ENCODE measurements at regions of chr11 and their contacts with region 1.

Region 1: DNA sequence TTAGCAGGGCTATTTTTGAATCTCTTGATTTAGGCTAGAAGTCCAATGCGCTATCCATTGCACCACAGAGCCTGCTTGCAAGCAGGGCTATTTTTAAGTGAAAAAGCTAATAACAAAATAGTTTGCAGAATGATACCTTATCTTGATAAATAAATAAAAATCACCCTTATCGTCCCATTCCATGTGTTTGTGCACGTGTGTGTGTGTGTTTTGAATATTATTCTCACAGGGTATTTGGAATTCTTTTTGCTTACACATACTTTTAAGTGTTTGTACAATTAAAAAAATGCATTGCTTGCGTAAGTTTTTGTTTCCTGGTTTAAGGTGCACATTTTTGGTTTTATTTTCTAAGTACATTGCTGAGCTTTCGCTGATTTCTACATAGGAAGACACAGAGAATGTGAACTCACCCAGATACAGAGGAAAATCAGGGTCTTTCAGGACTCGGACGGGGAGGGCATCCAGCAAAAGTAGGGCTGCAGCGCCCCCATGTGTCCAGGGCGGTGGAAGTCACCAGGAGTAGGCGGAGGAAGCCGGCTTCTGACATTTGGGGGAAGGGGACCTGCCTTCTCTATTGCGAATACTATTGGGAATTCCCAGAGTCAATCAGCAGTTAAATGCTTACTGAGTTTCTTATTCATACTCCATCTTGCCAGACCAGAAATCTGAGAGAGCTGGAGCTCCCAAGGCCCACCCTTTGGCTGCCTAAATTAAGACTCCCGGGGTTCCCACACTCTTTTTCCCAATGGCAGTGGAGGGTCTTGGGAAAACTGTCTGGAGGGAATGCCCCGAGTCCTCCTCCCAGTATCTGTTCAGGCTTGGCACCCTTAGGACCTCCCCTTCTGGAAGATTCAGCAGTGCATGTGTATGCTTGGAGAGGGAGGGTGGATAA is 27.2 kb downstream of the SLC1A2 start:
- DNase-seq: peak; percentile 49
- ATAC-seq: peak; percentile 92
- H3K4me3 ChIP-seq: no peak overlapping the region
- H3K27ac ChIP-seq: no peak overlapping the region
- H3K4me1 ChIP-seq: peaks cover 15 to 18% of the 10 kb centered on the region in 2 experiments
- H3K27me3 ChIP-seq: no peaks in the 10 kb centered on the region
- CTCF ChIP-seq: peak; percentile 83 to 98 (median 84)
- POLR2A ChIP-seq: no peak
- RAD21 ChIP-seq: peak; percentile 98

Region 2: DNA sequence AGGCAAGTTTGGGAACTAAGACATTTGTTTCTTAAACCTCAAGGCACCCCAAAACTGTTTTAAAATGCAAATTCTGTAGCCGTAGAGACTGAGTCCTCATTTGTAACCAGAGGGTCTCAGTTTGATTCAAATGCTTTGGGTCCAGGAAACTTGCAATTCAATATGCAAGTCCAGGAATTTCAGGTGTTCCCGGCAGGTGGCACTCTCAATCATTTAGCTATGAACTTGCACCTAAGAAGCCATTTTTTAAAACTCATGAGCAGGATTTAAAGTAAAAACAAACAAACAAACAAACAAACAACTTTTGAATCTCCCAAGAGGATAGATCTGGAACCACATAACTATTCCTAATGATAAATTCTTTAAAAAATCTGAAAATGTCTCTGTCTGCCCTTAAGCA is 1025.6 kb before region 1 on chr11:
- CTCF ChIA-PET with region 1: no interaction called
- POLR2A ChIA-PET with region 1: no interaction called
- RAD21 ChIA-PET with region 1: no interaction called
- intact Hi-C with region 1: loop called (anchors 5 kb)
- DNase-seq: peak; percentile 73
- ATAC-seq: peak; percentile 66
- H3K4me3 ChIP-seq: no peak overlapping the region
- H3K27ac ChIP-seq: no peak overlapping the region
- H3K4me1 ChIP-seq: peaks cover 5 to 7% of the 10 kb centered on the region in 2 experiments; a peak in 3 of 4 replicates
- H3K27me3 ChIP-seq: no peaks in the 10 kb centered on the region
- CTCF ChIP-seq: peak; percentile 70 to 89 (median 80)
- POLR2A ChIP-seq: no peak
- RAD21 ChIP-seq: peak; percentile 82

Region 3: DNA sequence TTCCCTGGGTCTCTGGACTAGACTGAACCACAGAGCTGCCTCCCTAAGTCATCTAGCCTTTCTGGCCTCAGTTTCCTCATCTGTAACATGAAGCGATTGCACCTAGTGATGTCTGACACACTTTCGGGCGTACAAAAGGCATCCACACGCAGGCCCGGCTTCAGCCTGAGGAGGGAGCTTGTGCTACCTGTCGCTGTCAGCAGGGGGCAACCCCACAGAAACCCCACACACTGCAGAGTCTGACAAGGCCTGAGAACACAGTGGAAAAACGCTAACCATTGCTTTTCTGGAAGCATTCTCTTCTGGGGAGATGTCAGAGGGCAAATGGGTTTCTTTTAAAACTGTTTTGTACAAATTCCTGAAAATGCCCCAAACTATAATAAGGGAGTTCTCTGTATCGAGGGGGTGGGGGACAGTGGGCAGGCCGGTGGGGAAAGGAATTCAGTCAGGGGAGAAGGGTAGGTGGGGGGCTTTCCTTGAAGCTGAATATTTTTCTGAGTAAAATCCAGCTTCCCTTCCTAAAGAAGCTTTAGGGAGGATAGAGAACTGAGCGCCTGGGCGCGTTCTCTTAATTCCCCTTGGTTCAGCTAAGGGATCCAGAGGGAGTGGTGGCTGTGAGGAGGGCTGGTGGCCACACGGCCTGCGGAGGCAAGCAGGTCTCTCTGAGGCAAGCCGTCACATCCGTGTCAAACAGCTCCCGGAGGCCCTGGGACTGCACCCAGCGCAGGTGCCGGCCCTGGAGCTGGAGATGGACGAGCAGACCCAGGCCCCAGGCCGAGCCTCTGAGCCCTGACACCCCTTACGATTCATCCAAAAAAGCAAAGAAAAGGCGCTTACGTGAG is 879.1 kb before region 1 on chr11:
- CTCF ChIA-PET with region 1: no interaction called
- POLR2A ChIA-PET with region 1: no interaction called
- RAD21 ChIA-PET with region 1: no interaction called
- intact Hi-C with region 1: loop called (anchors 2 kb)
- DNase-seq: peak; percentile 62
- ATAC-seq: peak; percentile 99
- H3K4me3 ChIP-seq: no peak overlapping the region
- H3K27ac ChIP-seq: no peak overlapping the region
- H3K4me1 ChIP-seq: peaks cover 2 to 22% of the 10 kb centered on the region in 2 experiments; a peak in 2 of 4 replicates
- H3K27me3 ChIP-seq: no peaks in the 10 kb centered on the region
- CTCF ChIP-seq: peak; percentile 66 to 97 (median 91)
- POLR2A ChIP-seq: no peak
- RAD21 ChIP-seq: peak; percentile 69

Region 4: GRCh38 chr11:34886609-34887008 is 505.6 kb before region 1 on chr11:
- CTCF ChIA-PET with region 1: no interaction called
- POLR2A ChIA-PET with region 1: no interaction called
- RAD21 ChIA-PET with region 1: no interaction called
- intact Hi-C with region 1: no loop called
- DNase-seq: no peak
- ATAC-seq: no peak
- H3K4me3 ChIP-seq: no peak overlapping the region
- H3K27ac ChIP-seq: no peak overlapping the region
- H3K4me1 ChIP-seq: peaks cover 5 to 10% of the 10 kb centered on the region in 2 experiments; a peak in 2 of 4 replicates
- H3K27me3 ChIP-seq: no peaks in the 10 kb centered on the region
- CTCF ChIP-seq: no peak
- POLR2A ChIP-seq: no peak
- RAD21 ChIP-seq: no peak

Region 5: DNA sequence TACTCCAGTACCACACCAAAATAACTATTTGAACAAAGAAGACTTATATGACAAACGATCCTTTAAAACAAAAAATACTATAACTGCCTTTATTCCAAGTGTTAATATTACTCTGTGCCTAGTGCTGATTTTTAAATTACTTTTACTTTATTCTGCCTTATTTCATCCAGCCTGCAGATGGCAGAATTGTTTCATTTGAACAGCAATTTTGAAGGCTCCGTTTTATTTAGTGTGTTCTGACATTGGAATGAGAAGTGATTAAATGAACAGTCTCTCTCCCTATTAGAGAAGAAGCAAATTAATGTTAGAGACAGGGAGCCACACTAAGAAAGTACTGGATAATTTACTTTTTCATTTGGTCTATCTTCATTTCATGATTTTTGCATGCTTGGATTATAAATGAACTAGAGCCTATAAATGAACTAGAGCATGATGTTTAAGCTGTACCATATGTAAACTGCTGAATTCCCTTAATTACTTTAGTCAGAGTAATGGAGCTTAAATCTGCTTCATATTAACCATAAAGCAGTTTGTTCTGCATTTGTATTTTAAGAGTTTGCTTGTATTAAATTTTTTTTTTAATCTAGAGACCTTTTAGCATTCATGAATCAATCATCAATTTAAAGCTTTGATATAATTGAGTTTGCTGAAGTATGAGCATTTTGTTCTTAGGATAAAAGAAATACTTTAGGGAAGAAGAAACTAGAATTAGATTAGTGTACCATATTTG is 465.9 kb before region 1 on chr11:
- CTCF ChIA-PET with region 1: interaction called, 37 read pairs
- POLR2A ChIA-PET with region 1: no interaction called
- RAD21 ChIA-PET with region 1: interaction called in 1 of 2 experiments, 3 read pairs
- intact Hi-C with region 1: loop called (anchors 1 kb)
- DNase-seq: peak; percentile 33
- ATAC-seq: peak; percentile 75
- H3K4me3 ChIP-seq: no peak overlapping the region
- H3K27ac ChIP-seq: no peak overlapping the region
- H3K4me1 ChIP-seq: 0 out of 4 replicates have a peak, but pooled peaks cover 0 to 6% of the 10 kb centered on the region in 2 experiments
- H3K27me3 ChIP-seq: no peaks in the 10 kb centered on the region
- CTCF ChIP-seq: peak; percentile 43 to 85 (median 80)
- POLR2A ChIP-seq: no peak
- RAD21 ChIP-seq: peak; percentile 91

Region 6: GRCh38 chr11:34997952-34998528 is 394.1 kb before region 1 on chr11:
- CTCF ChIA-PET with region 1: interaction called, 3 read pairs
- POLR2A ChIA-PET with region 1: interaction called, 3 read pairs
- RAD21 ChIA-PET with region 1: no interaction called
- intact Hi-C with region 1: loop called (anchors 1 kb)
- DNase-seq: no peak
- ATAC-seq: peak; percentile 40; the same call in 1 of the 2 replicates
- H3K4me3 ChIP-seq: no peak overlapping the region
- H3K27ac ChIP-seq: no peak overlapping the region
- H3K4me1 ChIP-seq: peaks cover under 1 to 6% of the 10 kb centered on the region in 2 experiments; a peak in 3 of 4 replicates
- H3K27me3 ChIP-seq: no peaks in the 10 kb centered on the region
- CTCF ChIP-seq: peak; percentile 17 to 75 (median 61); a peak in 4 of 6 replicates
- POLR2A ChIP-seq: no peak
- RAD21 ChIP-seq: peak; percentile 89

Region 7: DNA sequence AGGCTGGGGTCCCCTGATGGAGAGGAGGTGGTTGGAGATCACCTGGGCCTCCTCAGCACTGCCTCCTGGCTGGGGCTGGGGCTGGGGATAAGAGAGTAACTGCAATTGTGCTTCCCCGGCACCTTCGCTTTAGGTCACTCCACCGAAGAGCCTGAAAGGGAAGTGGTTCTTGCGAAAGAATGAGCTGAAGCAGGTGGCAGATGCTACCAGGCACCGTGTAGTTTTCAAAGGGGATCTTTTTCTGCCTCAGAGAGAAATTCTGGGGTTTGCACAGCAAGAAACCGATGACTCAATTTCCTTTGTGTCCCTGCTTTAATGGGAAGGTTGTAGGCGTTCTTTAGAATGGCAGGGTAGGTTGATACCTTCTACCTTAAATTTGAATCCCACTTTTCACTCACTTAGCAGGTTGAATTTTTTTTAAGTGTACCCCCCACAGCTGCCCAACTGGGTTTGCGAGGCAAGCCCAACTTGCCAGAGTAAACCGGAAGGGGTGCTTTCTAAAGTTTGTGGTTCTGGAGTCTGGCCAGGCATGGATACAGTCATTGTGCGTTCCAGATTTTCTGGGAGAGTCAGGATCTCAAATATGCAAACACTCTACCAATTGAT is 247.9 kb before region 1 on chr11:
- CTCF ChIA-PET with region 1: no interaction called
- POLR2A ChIA-PET with region 1: no interaction called
- RAD21 ChIA-PET with region 1: no interaction called
- intact Hi-C with region 1: loop called (anchors 5 kb)
- DNase-seq: no peak
- ATAC-seq: peak; percentile 44
- H3K4me3 ChIP-seq: peak overlapping the region; percentile 19 to 44; a peak in 3 of 4 replicates
- H3K27ac ChIP-seq: peak overlapping the region; percentile 97
- H3K4me1 ChIP-seq: peaks cover 68 to 90% of the 10 kb centered on the region in 2 experiments
- H3K27me3 ChIP-seq: no peaks in the 10 kb centered on the region
- CTCF ChIP-seq: no peak
- POLR2A ChIP-seq: no peak
- RAD21 ChIP-seq: no peak

Region 8: DNA sequence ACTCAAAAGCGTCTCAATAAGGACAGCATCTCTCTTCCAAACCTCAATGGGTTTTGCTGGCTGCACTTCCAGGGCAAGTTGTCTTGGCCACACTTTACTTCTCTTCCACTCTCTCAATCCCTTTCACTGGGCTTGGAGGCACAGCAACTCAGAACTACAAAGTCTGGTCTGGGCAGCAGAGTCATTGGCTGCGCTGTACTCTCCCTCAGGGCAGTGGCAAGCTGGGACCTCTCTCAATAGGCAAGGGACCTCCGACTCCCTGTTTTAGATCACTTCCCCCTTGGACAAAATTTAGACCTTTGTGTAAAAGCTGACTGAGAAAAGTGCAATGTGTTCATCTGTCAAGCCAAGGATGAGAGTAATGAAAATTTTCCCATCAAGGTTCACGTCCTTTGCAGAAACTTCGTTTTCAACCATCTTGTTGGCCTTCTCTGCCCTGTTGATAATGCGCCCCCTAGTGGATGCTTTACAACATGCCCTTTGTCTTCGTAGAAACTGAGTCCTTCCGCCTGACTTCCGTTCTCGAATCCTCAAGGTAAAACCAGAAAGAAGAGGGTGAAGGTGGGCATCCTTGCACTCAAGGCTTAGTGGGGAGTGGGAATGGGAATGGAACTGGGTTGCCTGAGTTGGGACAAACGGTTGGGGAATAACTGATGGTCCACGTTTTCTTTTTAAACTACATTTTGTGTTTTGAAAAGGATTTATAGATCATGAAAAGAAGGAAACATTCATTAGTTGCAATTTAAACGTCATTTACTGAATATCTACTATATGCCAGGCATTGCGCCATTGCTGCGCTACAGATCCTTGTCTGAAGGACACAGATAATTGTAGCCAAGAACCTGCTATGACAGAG is 154.1 kb before region 1 on chr11:
- CTCF ChIA-PET with region 1: no interaction called
- POLR2A ChIA-PET with region 1: no interaction called
- RAD21 ChIA-PET with region 1: interaction called in 1 of 2 experiments, 4 read pairs
- intact Hi-C with region 1: loop called (anchors 5 kb)
- DNase-seq: peak; percentile 80
- ATAC-seq: peak; percentile 75
- H3K4me3 ChIP-seq: 0 out of 4 replicates have a peak overlapping the region, but pooled peaks of 1 of the 2 experiments have one; percentile 2
- H3K27ac ChIP-seq: no peak overlapping the region
- H3K4me1 ChIP-seq: peaks cover 26 to 39% of the 10 kb centered on the region in 2 experiments
- H3K27me3 ChIP-seq: no peaks in the 10 kb centered on the region
- CTCF ChIP-seq: peak; percentile 61 to 96 (median 85); a peak in 5 of 6 replicates
- POLR2A ChIP-seq: no peak
- RAD21 ChIP-seq: peak; percentile 87

Region 9: GRCh38 chr11:35343033-35343598 is 49.1 kb before region 1 on chr11:
- CTCF ChIA-PET with region 1: no interaction called
- POLR2A ChIA-PET with region 1: no interaction called
- RAD21 ChIA-PET with region 1: no interaction called
- intact Hi-C with region 1: no loop called
- DNase-seq: no peak
- ATAC-seq: no peak
- H3K4me3 ChIP-seq: no peak overlapping the region
- H3K27ac ChIP-seq: no peak overlapping the region
- H3K4me1 ChIP-seq: peaks cover 0 to 7% of the 10 kb centered on the region in 2 experiments; a peak in 1 of 4 replicates
- H3K27me3 ChIP-seq: no peaks in the 10 kb centered on the region
- CTCF ChIP-seq: no peak
- POLR2A ChIP-seq: no peak
- RAD21 ChIP-seq: no peak

Measured in HCT116 (cell line).